Gastrocnemius medialis (tissue), 4 donors: ENCODE measurements at regions of chrX and their contacts with region 1.

Region 1: GRCh38 chrX:45344594-45344993 is 143.9 kb upstream of the DIPK2B start:
- DNase-seq: no peak
- ATAC-seq: no peak
- H3K4me3 ChIP-seq: no peak overlapping the region
- H3K27ac ChIP-seq: no peak overlapping the region
- H3K4me1 ChIP-seq: no peaks in the 10 kb centered on the region
- H3K27me3 ChIP-seq: peaks cover 0 to 5% (median 0%) of the 10 kb centered on the region in 3 donors
- CTCF ChIP-seq: no peak
- POLR2A ChIP-seq: no peak

Region 2: DNA sequence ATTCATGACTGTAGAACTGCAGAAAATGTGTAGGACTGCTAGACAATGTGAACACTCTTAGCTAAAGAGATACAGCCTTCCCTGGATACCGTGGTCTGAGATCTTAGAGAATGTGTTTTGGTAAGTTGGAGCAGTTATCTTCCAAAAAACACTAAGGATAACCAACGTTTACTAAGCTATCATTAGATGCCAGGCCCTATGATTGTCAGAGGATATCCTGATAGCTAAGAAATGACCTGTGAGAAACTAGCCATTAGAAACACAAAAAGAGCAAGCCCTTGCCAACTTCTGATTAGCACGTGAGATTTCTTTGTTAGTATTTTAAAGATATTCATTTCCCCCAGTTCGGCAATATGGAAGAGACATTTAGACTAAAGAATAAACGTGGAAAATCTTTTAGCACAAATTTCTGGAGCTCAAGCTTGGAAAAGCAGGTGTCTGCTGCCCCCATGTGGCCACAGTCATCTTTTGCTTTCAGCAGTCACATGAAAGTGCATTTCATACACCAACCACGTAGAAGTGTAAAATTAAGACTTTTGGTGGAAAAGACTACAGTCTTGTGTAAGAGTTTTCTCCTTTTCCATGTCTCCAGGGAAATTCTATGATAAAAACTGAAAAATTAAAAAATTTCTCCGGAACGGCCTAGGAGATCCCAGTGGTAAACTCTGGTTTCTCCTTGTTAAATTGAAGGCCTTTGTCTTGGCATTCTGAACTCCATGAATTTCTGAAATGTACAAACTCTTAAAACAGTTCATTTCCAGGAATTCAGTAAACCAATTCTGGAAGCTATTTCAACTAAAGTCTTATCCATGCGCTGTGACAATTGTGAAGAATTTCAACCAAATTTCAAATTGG is 1064.2 kb after region 1 on chrX:
- in situ Hi-C with region 1: loop called in 1 of 4 experiments (anchors 25 kb)
- intact Hi-C with region 1: no loop called
- DNase-seq: peak in 1 of 2 donors; percentile 24
- ATAC-seq: no peak
- H3K4me3 ChIP-seq: no peak overlapping the region
- H3K27ac ChIP-seq: no peak overlapping the region
- H3K4me1 ChIP-seq: no peaks in the 10 kb centered on the region
- H3K27me3 ChIP-seq: no peaks in the 10 kb centered on the region
- CTCF ChIP-seq: peak; percentile 46 to 84 (median 64)
- POLR2A ChIP-seq: no peak